Activated CD4-positive, alpha-beta memory T cell treated with anti-CD3 and anti-CD28 coated beads, Interleukin-2, amount 10 ng/mL, durations not matched to agents 7 days and 5 days (primary cell): ENCODE measurements at regions of chr2 and their contacts with region 1.

Region 1: DNA sequence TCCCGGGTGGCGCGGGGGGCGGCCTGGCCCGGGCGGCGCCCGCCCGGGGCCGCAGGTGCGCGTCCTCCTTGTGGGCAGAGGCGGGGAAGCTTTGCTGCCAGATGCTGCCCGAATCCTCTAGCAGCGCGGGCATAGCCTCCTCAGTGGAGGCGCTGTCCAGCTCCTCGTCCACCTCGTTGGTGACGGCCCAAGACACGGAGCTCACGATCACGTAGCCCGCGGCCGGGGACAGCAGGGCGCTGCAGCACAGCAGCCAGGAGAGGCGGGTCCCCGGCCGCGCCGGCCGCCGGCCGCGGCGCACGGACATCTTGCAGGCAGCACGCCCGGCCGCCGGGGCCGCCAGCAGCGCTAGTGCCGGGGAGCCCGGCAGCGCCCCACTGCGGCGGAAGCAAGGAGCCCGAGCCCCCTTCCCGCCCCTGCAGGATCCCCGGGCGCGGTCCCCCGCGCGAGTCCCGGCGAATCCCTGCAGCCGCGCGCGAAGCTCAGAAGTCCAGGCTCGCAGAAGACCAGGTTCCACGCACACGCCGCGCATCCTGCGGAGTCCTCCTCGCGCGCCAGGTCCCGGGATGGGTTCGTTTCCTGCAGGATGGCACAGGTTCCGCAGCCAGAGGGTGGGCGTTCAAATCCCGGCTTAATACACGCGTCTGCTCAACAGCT is at the start of gene CREG2:
- DNase-seq: peak; percentile 69
- H3K4me3 Mint-ChIP-seq: peak within 1 kb of the TSS; percentile 60
- H3K27ac Mint-ChIP-seq: no peak within 1 kb of the TSS
- H3K4me1 Mint-ChIP-seq: peaks cover 11% of the 10 kb centered on the region
- H3K27me3 Mint-ChIP-seq: peaks cover 58% of the 10 kb centered on the region
- total RNA-seq, gene CREG2: 0.65 to 0.98 TPM

Region 2: DNA sequence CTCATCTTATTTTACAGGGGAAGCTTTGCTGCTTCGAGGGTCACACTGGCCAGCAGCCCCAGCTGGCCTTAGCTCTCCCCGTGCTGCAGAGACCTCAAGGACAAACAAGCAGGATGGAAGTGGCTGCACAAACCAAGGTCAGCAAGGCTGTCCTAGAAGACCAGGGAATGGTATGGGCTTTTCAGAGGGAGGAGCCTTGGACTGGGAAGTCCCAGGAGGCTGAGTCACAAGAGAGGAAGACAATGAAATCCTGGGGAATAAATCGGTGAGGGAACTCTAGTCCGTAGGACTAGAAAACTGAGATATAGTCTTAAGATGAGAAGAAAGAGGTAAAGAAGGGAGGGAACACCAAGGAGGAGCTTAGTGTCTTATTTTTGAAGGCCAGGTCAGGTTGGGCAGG is 15.6 kb before region 1 on chr2:
- CTCF ChIA-PET with region 1: interaction called, 10 read pairs
- POLR2A ChIA-PET with region 1: no interaction called
- DNase-seq: no peak
- H3K4me3 Mint-ChIP-seq: no peak overlapping the region
- H3K27ac Mint-ChIP-seq: no peak overlapping the region
- H3K4me1 Mint-ChIP-seq: peaks cover 5% of the 10 kb centered on the region
- H3K27me3 Mint-ChIP-seq: peaks cover 3% of the 10 kb centered on the region

Region 3: DNA sequence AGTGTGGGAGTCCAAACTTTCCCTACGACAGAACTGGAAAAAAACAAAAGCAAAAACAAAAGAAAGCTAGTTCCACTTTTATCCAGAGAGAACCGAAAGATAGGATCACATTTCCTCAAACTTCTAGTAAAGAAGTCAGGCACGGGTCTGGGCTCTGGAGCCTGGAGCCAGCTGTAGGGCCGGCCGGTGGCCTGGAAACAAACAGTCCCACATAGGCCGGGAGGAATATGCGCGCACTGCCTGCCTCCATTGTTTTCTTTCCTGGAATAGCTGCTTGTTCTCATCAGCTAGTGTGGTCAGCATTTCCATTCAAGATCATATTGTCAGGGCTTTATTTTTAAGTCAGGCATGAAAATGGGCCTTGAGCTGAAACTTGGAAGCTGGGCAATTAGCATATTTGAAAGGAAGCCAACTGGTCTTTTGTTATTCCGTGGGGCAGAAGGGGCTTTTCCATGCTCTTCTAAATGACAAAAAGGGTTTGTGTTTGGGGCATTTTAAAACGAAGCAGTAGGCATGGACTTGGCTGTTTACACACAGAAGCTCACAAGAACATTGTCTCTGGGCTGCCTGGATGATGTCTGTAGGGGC is 146.4 kb after region 1 on chr2:
- CTCF ChIA-PET with region 1: no interaction called
- POLR2A ChIA-PET with region 1: no interaction called
- DNase-seq: no peak
- H3K4me3 Mint-ChIP-seq: no peak overlapping the region
- H3K27ac Mint-ChIP-seq: no peak overlapping the region
- H3K4me1 Mint-ChIP-seq: no peaks in the 10 kb centered on the region
- H3K27me3 Mint-ChIP-seq: no peaks in the 10 kb centered on the region